A549 (cell line): ENCODE measurements at regions of chr20 and their contacts with region 1.

Region 1: DNA sequence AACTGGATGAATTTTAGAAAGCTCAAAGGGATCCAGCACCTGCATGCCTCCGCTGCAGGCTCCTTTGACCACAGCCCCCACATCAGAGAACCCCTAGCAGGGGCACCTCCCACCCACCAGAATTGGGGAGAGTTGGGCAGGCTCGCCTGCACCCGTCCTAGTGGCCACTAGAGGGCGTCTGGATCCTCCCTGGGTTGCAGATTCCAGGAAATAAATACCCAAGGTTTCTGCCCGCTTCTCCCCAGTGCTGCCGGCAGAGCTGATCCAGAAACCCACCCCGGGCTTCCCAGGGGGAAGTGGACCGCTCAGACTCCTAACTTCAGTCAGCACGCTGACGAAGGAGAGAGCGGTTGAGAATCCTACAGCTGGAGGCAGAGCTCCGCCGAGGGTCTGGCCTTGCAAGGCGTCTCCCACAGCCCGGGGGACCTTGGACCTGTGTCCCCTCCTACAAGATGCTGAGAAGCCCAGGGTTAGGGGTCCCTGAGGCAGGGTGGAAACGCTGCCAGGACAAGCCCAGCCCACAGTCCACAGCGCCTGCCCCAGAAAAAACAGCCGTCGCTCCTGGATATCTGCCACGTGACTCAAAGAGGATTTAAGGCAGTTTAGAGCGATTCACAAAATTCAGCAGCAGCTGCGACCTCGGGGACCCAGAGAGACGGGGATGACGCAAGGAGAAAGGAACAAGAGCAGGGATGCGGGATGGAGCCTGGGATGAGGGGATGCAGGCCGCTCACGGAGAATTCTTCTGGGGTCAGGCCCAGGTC is 32.6 kb upstream of the PHACTR3 start:
- DNase-seq: peak; percentile 41 to 69
- ATAC-seq: peak; percentile 70 to 89
- H3K4me3 ChIP-seq: no peak overlapping the region
- H3K27ac ChIP-seq: no peak overlapping the region
- H3K4me1 ChIP-seq: no peaks in the 10 kb centered on the region
- CTCF ChIP-seq: peak; percentile 84
- EP300 ChIP-seq: no peak
- POLR2A ChIP-seq: no peak
- RAD21 ChIP-seq: peak; percentile 43 to 45; a peak in 3 of 5 replicates

Region 2: DNA sequence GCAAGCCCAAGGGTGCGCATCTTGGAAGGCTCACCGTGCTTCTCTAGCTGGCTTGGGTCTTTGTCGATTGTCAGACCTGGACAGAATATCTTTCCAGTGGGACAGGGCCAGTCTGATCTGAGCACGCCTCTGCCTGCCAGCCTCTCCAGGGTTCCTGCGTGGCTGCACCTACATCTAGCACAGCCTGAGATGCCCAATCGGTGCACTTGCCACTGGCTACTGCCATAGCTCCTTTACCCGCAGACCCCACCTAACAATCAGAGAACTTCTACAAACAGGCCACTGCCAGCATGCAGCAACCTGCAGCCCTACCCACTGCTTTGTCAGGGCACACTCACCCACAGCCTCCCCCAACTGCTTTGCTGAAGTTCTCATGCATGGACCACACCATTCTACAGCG is 24.1 kb before region 1 on chr20:
- CTCF ChIA-PET with region 1: interaction called, 30 read pairs
- POLR2A ChIA-PET with region 1: no interaction called
- DNase-seq: no peak
- ATAC-seq: no peak
- H3K4me3 ChIP-seq: no peak overlapping the region
- H3K27ac ChIP-seq: no peak overlapping the region
- H3K4me1 ChIP-seq: no peaks in the 10 kb centered on the region
- CTCF ChIP-seq: no peak
- EP300 ChIP-seq: no peak
- POLR2A ChIP-seq: no peak
- RAD21 ChIP-seq: no peak

Region 3: GRCh38 chr20:59585714-59586409 is 14.1 kb after region 1 on chr20:
- CTCF ChIA-PET with region 1: interaction called, 33 read pairs
- POLR2A ChIA-PET with region 1: no interaction called
- DNase-seq: no peak
- ATAC-seq: no peak
- H3K4me3 ChIP-seq: no peak overlapping the region
- H3K27ac ChIP-seq: no peak overlapping the region
- H3K4me1 ChIP-seq: no peaks in the 10 kb centered on the region
- CTCF ChIP-seq: no peak
- EP300 ChIP-seq: no peak
- POLR2A ChIP-seq: no peak
- RAD21 ChIP-seq: no peak

Region 4: DNA sequence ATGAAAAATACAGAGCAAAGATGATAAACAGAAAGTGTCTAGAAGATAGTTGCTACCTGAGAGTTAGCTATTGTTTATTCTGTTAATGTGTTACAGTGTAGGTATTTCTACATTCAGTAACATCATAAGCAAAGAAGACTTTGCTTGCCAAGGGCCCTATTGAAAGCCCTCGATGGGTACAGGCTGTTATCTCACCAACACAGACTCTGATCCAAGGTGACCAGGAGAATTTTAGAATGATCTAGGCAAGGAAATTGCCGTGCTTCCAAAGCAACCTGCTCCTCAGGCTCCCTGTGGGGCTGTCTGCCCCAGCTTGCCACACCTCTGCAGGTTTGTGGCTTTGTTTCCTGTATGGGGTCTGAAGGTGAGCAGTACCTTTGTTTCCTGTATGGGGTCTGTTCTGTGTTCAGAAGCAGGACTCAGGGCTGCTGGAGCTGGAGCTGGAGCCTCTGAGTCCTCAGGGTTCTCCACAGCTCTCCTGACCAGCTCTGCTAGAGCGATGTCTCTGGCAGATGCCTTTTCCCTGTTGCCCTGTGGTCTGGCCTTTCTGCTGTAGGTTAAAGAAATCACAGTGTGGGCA is 65.1 kb after region 1 on chr20:
- CTCF ChIA-PET with region 1: interaction called, 10 read pairs
- POLR2A ChIA-PET with region 1: no interaction called
- DNase-seq: no peak
- ATAC-seq: no peak
- H3K4me3 ChIP-seq: no peak overlapping the region
- H3K27ac ChIP-seq: no peak overlapping the region
- H3K4me1 ChIP-seq: no peaks in the 10 kb centered on the region
- CTCF ChIP-seq: no peak
- EP300 ChIP-seq: no peak
- POLR2A ChIP-seq: no peak
- RAD21 ChIP-seq: no peak